ENCODE measurements at regions of chr9 and their contacts with region 1.

Region 1: GRCh38 chr9:68779558-68780384 is 74.7 kb downstream of the PIP5K1B start:
- DNase-seq: peak; percentile 92 to 98 (median 95)
- ATAC-seq: peak; percentile 95
- H3K4me3 ChIP-seq: peak overlapping the region; percentile 88
- H3K4me3 Mint-ChIP-seq: no peak overlapping the region
- H3K27ac ChIP-seq: peak overlapping the region; percentile 90
- H3K27ac Mint-ChIP-seq: no peak overlapping the region
- H3K4me1 ChIP-seq: peaks cover 36 to 49% of the 10 kb centered on the region in 2 donors
- H3K4me1 Mint-ChIP-seq: peaks cover 0 to 8% (median 0%) of the 10 kb centered on the region in 7 donors
- H3K27me3 ChIP-seq: no peaks in the 10 kb centered on the region
- H3K27me3 Mint-ChIP-seq: peaks cover 0 to 6% (median 3%) of the 10 kb centered on the region in 5 donors

Region 2: GRCh38 chr9:68584189-68585033 is 195.4 kb before region 1 on chr9:
- CTCF ChIA-PET with region 1: no interaction called
- POLR2A ChIA-PET with region 1: no interaction called
- intact Hi-C with region 1: loop called in 1 of 2 experiments (anchors 1 kb)
- DNase-seq: peak; percentile 64 to 89 (median 80)
- ATAC-seq: peak; percentile 100
- H3K4me3 ChIP-seq: no peak overlapping the region
- H3K4me3 Mint-ChIP-seq: no peak overlapping the region
- H3K27ac ChIP-seq: no peak overlapping the region
- H3K27ac Mint-ChIP-seq: peak overlapping the region in 1 of 9 donors; percentile 63
- H3K4me1 ChIP-seq: no peaks in the 10 kb centered on the region
- H3K4me1 Mint-ChIP-seq: peaks cover 0 to 5% (median 0%) of the 10 kb centered on the region in 7 donors
- H3K27me3 ChIP-seq: no peaks in the 10 kb centered on the region
- H3K27me3 Mint-ChIP-seq: peaks cover 0 to 14% (median 10%) of the 10 kb centered on the region in 5 donors

Region 3: GRCh38 chr9:68793605-68794343 is 14.0 kb after region 1 on chr9:
- CTCF ChIA-PET with region 1: no interaction called
- POLR2A ChIA-PET with region 1: interaction called, 3 read pairs
- intact Hi-C with region 1: loop called in 1 of 2 experiments (anchors 2 kb)
- DNase-seq: no peak
- ATAC-seq: peak; percentile 38
- H3K4me3 ChIP-seq: no peak overlapping the region
- H3K4me3 Mint-ChIP-seq: no peak overlapping the region
- H3K27ac ChIP-seq: no peak overlapping the region
- H3K27ac Mint-ChIP-seq: no peak overlapping the region
- H3K4me1 ChIP-seq: no peaks in the 10 kb centered on the region
- H3K4me1 Mint-ChIP-seq: peaks cover 0 to 7% (median 0%) of the 10 kb centered on the region in 7 donors
- H3K27me3 ChIP-seq: no peaks in the 10 kb centered on the region
- H3K27me3 Mint-ChIP-seq: peaks cover 0 to 8% (median 0%) of the 10 kb centered on the region in 5 donors

Region 4: DNA sequence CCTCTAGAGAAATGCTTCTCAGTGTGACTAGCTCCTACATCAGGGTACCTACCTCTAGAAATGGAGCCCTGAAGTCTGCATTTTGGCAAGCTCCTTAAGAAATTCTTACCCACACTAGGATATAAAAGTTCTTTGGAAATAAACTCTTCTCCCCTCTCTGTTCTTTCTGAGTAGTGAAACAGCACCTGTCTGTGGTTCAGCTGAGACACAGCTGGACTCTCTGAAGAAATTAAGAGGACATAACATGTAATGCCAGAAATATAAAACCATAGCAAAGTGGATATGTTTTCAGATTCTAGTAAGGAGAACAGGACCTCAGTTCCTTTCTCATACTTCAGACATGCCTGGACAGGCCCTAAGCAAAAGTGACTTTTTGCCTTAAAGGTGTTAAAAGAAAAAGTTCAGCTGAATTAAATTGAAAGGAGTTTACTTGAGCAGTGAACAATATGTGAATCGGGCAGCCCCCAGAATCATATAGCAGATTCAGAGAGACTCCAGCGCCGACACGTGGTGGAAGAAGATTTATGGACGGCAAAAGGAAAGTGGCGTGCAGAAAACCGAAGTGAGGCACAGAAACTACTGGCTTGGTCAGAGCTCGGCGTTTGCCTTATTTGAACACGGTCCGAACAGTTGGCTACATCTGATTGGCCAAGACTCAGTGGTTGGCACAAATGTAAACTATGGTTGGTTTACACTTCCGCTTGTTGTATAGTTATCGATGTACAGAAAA is 169.7 kb after region 1 on chr9:
- CTCF ChIA-PET with region 1: interaction called, 3 read pairs
- POLR2A ChIA-PET with region 1: interaction called, 8 read pairs
- intact Hi-C with region 1: loop called (anchors 2 to 5 kb)
- DNase-seq: peak in 7 of 9 donors; percentile 15 to 32 (median 24)
- ATAC-seq: no peak
- H3K4me3 ChIP-seq: no peak overlapping the region
- H3K4me3 Mint-ChIP-seq: peak overlapping the region in 1 of 10 donors; percentile 21
- H3K27ac ChIP-seq: no peak overlapping the region
- H3K27ac Mint-ChIP-seq: peak overlapping the region in 2 of 9 donors; percentile 43 to 57
- H3K4me1 ChIP-seq: no peaks in the 10 kb centered on the region
- H3K4me1 Mint-ChIP-seq: peaks cover 0 to 36% (median 0%) of the 10 kb centered on the region in 7 donors
- H3K27me3 ChIP-seq: no peaks in the 10 kb centered on the region
- H3K27me3 Mint-ChIP-seq: peaks cover 0 to 16% (median 0%) of the 10 kb centered on the region in 5 donors

Region 5: DNA sequence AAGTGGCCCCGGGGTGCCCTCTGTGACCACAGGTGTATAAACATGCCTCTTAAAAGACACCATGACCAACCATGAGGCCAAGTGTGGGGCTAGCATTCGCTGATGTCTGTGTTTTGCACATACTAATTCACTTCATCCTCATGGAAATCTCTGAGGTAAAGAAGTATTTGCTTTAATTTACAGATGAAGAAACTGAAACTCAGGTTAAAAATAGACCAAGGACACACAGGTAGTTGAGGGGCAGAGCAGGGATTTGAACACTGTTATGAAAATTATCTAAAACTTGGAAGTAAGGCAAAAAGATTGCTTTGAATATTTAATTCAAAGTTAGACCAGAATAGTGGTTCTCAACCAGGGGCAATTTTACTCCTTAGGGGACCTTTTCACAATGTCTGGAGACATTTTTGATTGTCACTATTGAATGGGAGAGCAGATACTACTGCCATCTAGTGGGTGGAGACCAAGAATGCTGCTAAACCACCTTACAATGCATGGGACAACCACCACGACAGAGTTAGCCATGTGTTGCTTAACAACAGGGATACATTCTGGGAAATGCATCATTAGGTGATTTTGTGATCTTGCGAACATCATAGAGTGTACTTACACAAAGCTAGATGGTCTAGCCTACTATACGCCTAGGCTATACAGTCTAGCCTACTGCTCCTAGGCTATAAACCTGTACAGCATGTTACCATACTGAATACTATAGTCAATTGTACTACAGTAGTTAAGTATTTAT is 247.8 kb after region 1 on chr9:
- CTCF ChIA-PET with region 1: no interaction called
- POLR2A ChIA-PET with region 1: interaction called, 4 read pairs
- intact Hi-C with region 1: loop called in 1 of 2 experiments (anchors 2 kb)
- DNase-seq: peak in 7 of 9 donors; percentile 27 to 67 (median 61)
- ATAC-seq: peak; percentile 88
- H3K4me3 ChIP-seq: no peak overlapping the region
- H3K4me3 Mint-ChIP-seq: peak overlapping the region in 7 of 10 donors; percentile 6 to 61 (median 31)
- H3K27ac ChIP-seq: no peak overlapping the region
- H3K27ac Mint-ChIP-seq: peak overlapping the region in 8 of 9 donors; percentile 2 to 88 (median 62)
- H3K4me1 ChIP-seq: peaks cover 9 to 37% of the 10 kb centered on the region in 2 donors
- H3K4me1 Mint-ChIP-seq: peaks cover 33 to 69% (median 61%) of the 10 kb centered on the region in 7 donors
- H3K27me3 ChIP-seq: no peaks in the 10 kb centered on the region
- H3K27me3 Mint-ChIP-seq: peaks cover 0 to 12% (median 0%) of the 10 kb centered on the region in 5 donors

Region 6: GRCh38 chr9:69174616-69175463 is 395.1 kb after region 1 on chr9:
- CTCF ChIA-PET with region 1: no interaction called
- POLR2A ChIA-PET with region 1: no interaction called
- intact Hi-C with region 1: loop called in 1 of 2 experiments (anchors 10 kb)
- DNase-seq: peak in 1 of 9 donors; percentile 69
- ATAC-seq: peak; percentile 57
- H3K4me3 ChIP-seq: peak overlapping the region; percentile 36
- H3K4me3 Mint-ChIP-seq: peak overlapping the region; percentile 76 to 92 (median 82)
- H3K27ac ChIP-seq: no peak overlapping the region
- H3K27ac Mint-ChIP-seq: peak overlapping the region in 1 of 9 donors; percentile 79
- H3K4me1 ChIP-seq: peaks cover 10 to 12% of the 10 kb centered on the region in 2 donors
- H3K4me1 Mint-ChIP-seq: peaks cover 25 to 60% (median 30%) of the 10 kb centered on the region in 7 donors
- H3K27me3 ChIP-seq: no peaks in the 10 kb centered on the region
- H3K27me3 Mint-ChIP-seq: peaks cover 15 to 43% (median 24%) of the 10 kb centered on the region in 5 donors

Measured in naive thymus-derived CD4-positive, alpha-beta T cell (primary cell).